MCF 10A (cell line): ENCODE measurements at regions of chr5 and their contacts with region 1.

Region 1: DNA sequence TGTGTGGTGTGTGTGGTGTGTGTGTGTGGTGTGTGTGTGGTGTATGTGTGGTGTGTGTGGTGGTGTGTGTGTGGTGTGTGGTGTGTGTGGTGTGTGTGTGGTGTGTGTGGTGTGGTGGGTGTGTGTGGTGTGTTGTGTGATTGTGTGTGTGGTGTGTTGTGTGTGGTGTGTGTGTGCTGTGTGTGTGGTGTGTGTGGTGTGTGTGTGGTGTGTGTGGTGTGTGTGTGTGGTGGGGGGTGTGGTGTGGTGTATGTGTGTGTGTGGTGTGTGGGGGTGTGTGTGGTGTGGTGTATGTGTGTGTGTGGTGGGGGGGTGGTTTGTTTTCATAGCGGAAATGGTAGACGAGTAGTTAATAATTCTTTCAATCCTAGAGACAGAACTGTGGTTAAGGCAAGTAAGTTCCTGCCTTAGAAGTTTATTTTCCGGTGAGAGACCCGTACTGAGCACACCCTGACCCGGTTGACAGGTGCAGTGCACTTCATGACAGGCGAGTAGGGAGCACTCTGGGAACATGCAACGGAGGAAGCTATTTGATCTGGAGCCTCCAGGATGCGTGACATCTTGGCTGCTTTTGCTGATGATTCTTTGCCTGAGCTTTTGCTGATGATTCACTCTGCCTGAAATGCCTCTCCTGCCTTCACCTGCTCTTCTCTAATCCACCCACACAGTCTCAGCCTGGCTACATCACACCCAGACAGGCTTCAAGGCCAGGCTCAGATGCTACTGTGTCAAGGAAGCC is 21.7 kb upstream of the FAT2 start:
- DNase-seq: peak; percentile 93
- H3K4me3 Mint-ChIP-seq: no peak overlapping the region
- H3K27ac Mint-ChIP-seq: peak overlapping the region; percentile 30
- H3K4me1 Mint-ChIP-seq: peaks cover 56% of the 10 kb centered on the region
- H3K27me3 Mint-ChIP-seq: no peaks in the 10 kb centered on the region
- CTCF ChIP-seq: no peak

Region 2: GRCh38 chr5:151592855-151593408 is 19.9 kb before region 1 on chr5:
- CTCF ChIA-PET with region 1: interaction called, 10 read pairs
- POLR2A ChIA-PET with region 1: interaction called, 402 read pairs
- intact Hi-C with region 1: loop called (anchors 2 kb)
- DNase-seq: no peak
- H3K4me3 Mint-ChIP-seq: no peak overlapping the region
- H3K27ac Mint-ChIP-seq: no peak overlapping the region
- H3K4me1 Mint-ChIP-seq: peaks cover 40% of the 10 kb centered on the region
- H3K27me3 Mint-ChIP-seq: no peaks in the 10 kb centered on the region
- CTCF ChIP-seq: no peak

Region 3: GRCh38 chr5:151598984-151599383 is 13.9 kb before region 1 on chr5:
- CTCF ChIA-PET with region 1: interaction called, 5 read pairs
- POLR2A ChIA-PET with region 1: interaction called, 402 read pairs
- intact Hi-C with region 1: no loop called
- DNase-seq: peak; percentile 70
- H3K4me3 Mint-ChIP-seq: no peak overlapping the region
- H3K27ac Mint-ChIP-seq: no peak overlapping the region
- H3K4me1 Mint-ChIP-seq: peaks cover 27% of the 10 kb centered on the region
- H3K27me3 Mint-ChIP-seq: no peaks in the 10 kb centered on the region
- CTCF ChIP-seq: no peak

Region 4: DNA sequence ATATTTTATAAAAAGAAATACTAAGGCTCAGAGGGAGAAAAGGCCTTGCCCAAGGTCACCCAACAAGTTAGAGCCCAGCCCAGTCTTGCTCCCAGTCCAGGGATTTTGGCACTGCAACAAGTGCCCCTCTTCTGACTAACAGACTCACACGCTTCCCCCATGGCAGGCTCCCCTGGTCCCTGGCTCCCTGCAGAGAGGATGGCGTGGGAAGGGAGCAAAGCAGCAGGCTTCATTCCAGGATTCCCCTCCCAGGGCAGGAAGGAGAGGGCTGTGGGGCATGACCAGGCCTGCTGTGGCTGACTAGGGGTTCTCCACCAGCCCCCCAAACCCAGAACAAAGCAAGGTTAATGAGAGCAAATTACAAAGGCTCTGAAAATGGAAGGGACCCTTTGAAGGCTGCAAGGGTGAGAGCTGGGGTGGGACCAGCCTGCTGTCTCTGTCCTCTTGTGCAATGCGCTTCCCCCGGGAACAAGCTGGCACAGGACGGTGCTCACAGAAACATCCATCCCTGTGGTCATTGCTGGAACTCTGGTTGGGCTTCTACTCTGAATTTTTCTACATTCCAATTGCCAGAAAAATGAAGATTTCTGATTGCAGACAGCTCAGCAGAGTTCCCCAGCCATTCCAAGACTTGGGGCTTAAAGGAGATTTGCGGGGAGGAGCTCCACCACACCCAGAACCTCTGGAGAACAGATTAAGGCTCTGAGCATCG is 15.4 kb after region 1 on chr5:
- CTCF ChIA-PET with region 1: interaction called, 112 read pairs
- POLR2A ChIA-PET with region 1: interaction called, 535 read pairs
- intact Hi-C with region 1: no loop called
- DNase-seq: peak; percentile 99
- H3K4me3 Mint-ChIP-seq: no peak overlapping the region
- H3K27ac Mint-ChIP-seq: peak overlapping the region; percentile 50
- H3K4me1 Mint-ChIP-seq: peaks cover 53% of the 10 kb centered on the region
- H3K27me3 Mint-ChIP-seq: no peaks in the 10 kb centered on the region
- CTCF ChIP-seq: no peak